Esophagus muscularis mucosa (tissue), 4 donors: ENCODE measurements at regions of chr20 and their contacts with region 1.

Region 1: GRCh38 chr20:10603971-10604864 is 69.6 kb downstream of the JAG1 start:
- DNase-seq: no peak
- H3K4me3 ChIP-seq: no peak overlapping the region
- H3K27ac ChIP-seq: peak overlapping the region; percentile 55 to 69 (median 64)
- H3K4me1 ChIP-seq: peaks cover 0 to 26% (median 21%) of the 10 kb centered on the region in 4 donors
- H3K27me3 ChIP-seq: no peaks in the 10 kb centered on the region
- CTCF ChIP-seq: no peak
- EP300 ChIP-seq: no peak
- POLR2A ChIP-seq: no peak

Region 2: GRCh38 chr20:10673988-10674711 is 69.9 kb after region 1 on chr20 and contains the start of gene JAG1:
- intact Hi-C with region 1: loop called (anchors 5 kb)
- DNase-seq: peak; percentile 95
- H3K4me3 ChIP-seq: peak within 1 kb of the TSS; percentile 67 to 78 (median 72)
- H3K27ac ChIP-seq: peak within 1 kb of the TSS; percentile 79 to 99 (median 93)
- H3K4me1 ChIP-seq: peaks cover 6 to 59% (median 47%) of the 10 kb centered on the region in 4 donors
- H3K27me3 ChIP-seq: peaks cover 0 to 31% (median 0%) of the 10 kb centered on the region in 4 donors
- CTCF ChIP-seq: no peak
- EP300 ChIP-seq: no peak
- POLR2A ChIP-seq: peak; percentile 43
- total RNA-seq, gene JAG1: 30.7 to 41.9 (median 36.3) TPM